Calu3 (cell line): ENCODE measurements at regions of chr11 and their contacts with region 1.

Region 1: GRCh38 chr11:100980156-100980555 is 149.5 kb downstream of the PGR start:
- DNase-seq: no peak
- H3K4me3 Mint-ChIP-seq: no peak overlapping the region
- H3K27ac Mint-ChIP-seq: no peak overlapping the region
- H3K4me1 Mint-ChIP-seq: no peaks in the 10 kb centered on the region
- H3K27me3 Mint-ChIP-seq: no peaks in the 10 kb centered on the region
- CTCF ChIP-seq: no peak

Region 2: GRCh38 chr11:100925935-100926334 is 54.2 kb before region 1 on chr11:
- CTCF ChIA-PET with region 1: no interaction called
- intact Hi-C with region 1: no loop called
- DNase-seq: no peak
- H3K4me3 Mint-ChIP-seq: no peak overlapping the region
- H3K27ac Mint-ChIP-seq: no peak overlapping the region
- H3K4me1 Mint-ChIP-seq: no peaks in the 10 kb centered on the region
- H3K27me3 Mint-ChIP-seq: no peaks in the 10 kb centered on the region
- CTCF ChIP-seq: no peak

Region 3: GRCh38 chr11:101436511-101437142 is 456.5 kb after region 1 on chr11:
- CTCF ChIA-PET with region 1: no interaction called
- intact Hi-C with region 1: loop called (anchors 10 kb)
- DNase-seq: peak; percentile 54
- H3K4me3 Mint-ChIP-seq: no peak overlapping the region
- H3K27ac Mint-ChIP-seq: no peak overlapping the region
- H3K4me1 Mint-ChIP-seq: no peaks in the 10 kb centered on the region
- H3K27me3 Mint-ChIP-seq: no peaks in the 10 kb centered on the region
- CTCF ChIP-seq: peak; percentile 29